H1 (cell line): ENCODE measurements at regions of chr17 and their contacts with region 1.

Region 1: GRCh38 chr17:69414408-69415274 is at the start of gene MAP2K6:
- DNase-seq: peak; percentile 46 to 85
- H3K4me3 ChIP-seq: peak within 1 kb of the TSS; percentile 72 to 85 (median 78)
- H3K27ac ChIP-seq: no peak within 1 kb of the TSS
- H3K4me1 ChIP-seq: peaks cover 0 to 13% (median 2%) of the 10 kb centered on the region in 4 experiments; a peak in 5 of 7 replicates
- H3K27me3 ChIP-seq: no peaks in the 10 kb centered on the region
- CTCF ChIP-seq: no peak
- EP300 ChIP-seq: no peak
- POLR2A ChIP-seq: peak in 1 of 2 experiments; percentile 38; a peak in 1 of 3 replicates
- RAD21 ChIP-seq: no peak
- total RNA-seq, gene MAP2K6: 42.2 and 44.1 TPM in 2 replicates

Region 2: GRCh38 chr17:69223809-69224208 is 190.8 kb before region 1 on chr17:
- CTCF ChIA-PET with region 1: no interaction called
- POLR2A ChIA-PET with region 1: no interaction called
- DNase-seq: no peak
- H3K4me3 ChIP-seq: no peak overlapping the region
- H3K27ac ChIP-seq: no peak overlapping the region
- H3K4me1 ChIP-seq: no peaks in the 10 kb centered on the region
- H3K27me3 ChIP-seq: no peaks in the 10 kb centered on the region
- CTCF ChIP-seq: no peak
- EP300 ChIP-seq: no peak
- POLR2A ChIP-seq: no peak
- RAD21 ChIP-seq: no peak

Region 3: GRCh38 chr17:69269131-69269998 is 145.3 kb before region 1 on chr17:
- CTCF ChIA-PET with region 1: no interaction called
- POLR2A ChIA-PET with region 1: no interaction called
- DNase-seq: no peak
- H3K4me3 ChIP-seq: no peak overlapping the region
- H3K27ac ChIP-seq: no peak overlapping the region
- H3K4me1 ChIP-seq: no peaks in the 10 kb centered on the region
- H3K27me3 ChIP-seq: no peaks in the 10 kb centered on the region
- CTCF ChIP-seq: no peak
- EP300 ChIP-seq: no peak
- POLR2A ChIP-seq: no peak
- RAD21 ChIP-seq: no peak

Region 4: DNA sequence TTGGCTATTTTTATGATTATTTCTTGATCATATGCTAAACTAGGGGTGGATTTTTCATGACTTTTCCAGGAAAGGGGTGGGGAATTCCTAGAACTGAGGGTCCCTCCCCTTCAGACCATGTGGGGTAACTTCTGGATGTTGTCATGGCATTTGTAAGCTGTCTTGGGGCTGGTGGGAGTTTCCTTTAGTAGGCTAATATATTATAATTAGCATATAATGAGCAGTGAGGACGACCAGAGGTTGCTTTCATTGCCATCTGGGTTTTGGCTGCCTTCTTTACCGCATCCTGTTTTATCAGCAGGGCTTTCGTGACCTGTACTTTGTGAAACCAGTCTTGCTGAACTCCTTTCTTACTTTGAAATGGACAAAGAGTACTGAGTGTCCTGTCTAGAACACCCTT is 47.3 kb before region 1 on chr17:
- CTCF ChIA-PET with region 1: no interaction called
- POLR2A ChIA-PET with region 1: no interaction called
- DNase-seq: no peak
- H3K4me3 ChIP-seq: no peak overlapping the region
- H3K27ac ChIP-seq: no peak overlapping the region
- H3K4me1 ChIP-seq: no peaks in the 10 kb centered on the region; a peak in 1 of 7 replicates
- H3K27me3 ChIP-seq: no peaks in the 10 kb centered on the region
- CTCF ChIP-seq: no peak
- EP300 ChIP-seq: no peak
- POLR2A ChIP-seq: no peak
- RAD21 ChIP-seq: no peak

Region 5: GRCh38 chr17:69430488-69430887 is 15.8 kb after region 1 on chr17:
- CTCF ChIA-PET with region 1: interaction called, 11 read pairs
- POLR2A ChIA-PET with region 1: interaction called, 4 read pairs
- DNase-seq: no peak
- H3K4me3 ChIP-seq: no peak overlapping the region
- H3K27ac ChIP-seq: peak overlapping the region; percentile 34; the same call in 1 of the 2 replicates
- H3K4me1 ChIP-seq: peaks cover 3 to 17% (median 12%) of the 10 kb centered on the region in 4 experiments
- H3K27me3 ChIP-seq: no peaks in the 10 kb centered on the region
- CTCF ChIP-seq: no peak
- EP300 ChIP-seq: no peak
- POLR2A ChIP-seq: no peak
- RAD21 ChIP-seq: no peak